PC-3 (cell line): ENCODE measurements at regions of chr2 and their contacts with region 1.

Region 1: GRCh38 chr2:127106951-127107621 is at the start of gene BIN1:
- DNase-seq: peak; percentile 89
- ATAC-seq: peak; percentile 84
- H3K4me3 ChIP-seq: peak within 1 kb of the TSS; percentile 97
- H3K27ac ChIP-seq: peak within 1 kb of the TSS; percentile 23
- H3K4me1 ChIP-seq: peaks cover 18% of the 10 kb centered on the region; the same call in 1 of the 2 replicates
- H3K27me3 ChIP-seq: no peaks in the 10 kb centered on the region
- CTCF ChIP-seq: no peak
- total RNA-seq, gene BIN1: 58.9 and 77.5 TPM in 2 replicates

Region 2: GRCh38 chr2:127034883-127035611 is 72.0 kb before region 1 on chr2:
- CTCF ChIA-PET with region 1: no interaction called
- POLR2A ChIA-PET with region 1: no interaction called
- intact Hi-C with region 1: no loop called
- DNase-seq: no peak
- ATAC-seq: no peak; the same call in none of the 2 replicates
- H3K4me3 ChIP-seq: no peak overlapping the region
- H3K27ac ChIP-seq: no peak overlapping the region
- H3K4me1 ChIP-seq: peaks cover 6% of the 10 kb centered on the region; the same call in 1 of the 2 replicates
- H3K27me3 ChIP-seq: no peaks in the 10 kb centered on the region
- CTCF ChIP-seq: no peak

Region 3: GRCh38 chr2:127064642-127065250 is 42.3 kb before region 1 on chr2:
- CTCF ChIA-PET with region 1: interaction called, 3 read pairs
- POLR2A ChIA-PET with region 1: no interaction called
- intact Hi-C with region 1: loop called (anchors 2 kb)
- DNase-seq: peak; percentile 98
- ATAC-seq: peak; percentile 97
- H3K4me3 ChIP-seq: peak overlapping the region; percentile 32; the same call in 1 of the 2 replicates
- H3K27ac ChIP-seq: peak overlapping the region; percentile 74
- H3K4me1 ChIP-seq: peaks cover 18% of the 10 kb centered on the region
- H3K27me3 ChIP-seq: no peaks in the 10 kb centered on the region
- CTCF ChIP-seq: peak; percentile 47

Region 4: DNA sequence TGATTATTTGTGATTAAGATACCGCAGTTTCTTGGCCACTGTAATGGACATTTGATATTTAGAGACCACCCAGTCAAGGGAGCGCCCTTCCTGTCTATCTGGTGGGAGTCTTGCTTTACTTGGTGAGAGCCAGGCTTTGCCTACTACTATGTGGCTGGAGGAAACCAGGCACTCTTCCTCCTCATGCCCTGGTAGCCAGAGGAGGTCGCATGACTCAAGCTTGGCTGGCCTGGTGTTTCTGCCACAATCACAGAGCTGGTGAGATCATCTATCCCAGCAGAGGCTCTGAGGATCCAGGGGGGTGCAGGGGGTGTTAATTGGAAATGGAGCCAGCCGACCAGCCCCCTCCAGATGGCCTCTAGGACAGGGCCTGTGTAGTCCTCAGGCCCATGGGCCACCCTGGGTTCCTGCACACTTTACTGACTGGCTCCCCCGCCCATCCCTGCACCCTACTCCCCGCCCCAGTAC is 46.6 kb after region 1 on chr2:
- CTCF ChIA-PET with region 1: interaction called, 7 read pairs
- POLR2A ChIA-PET with region 1: interaction called, 12 read pairs
- intact Hi-C with region 1: loop called (anchors 2 kb)
- DNase-seq: peak; percentile 91
- ATAC-seq: peak; percentile 95
- H3K4me3 ChIP-seq: no peak overlapping the region
- H3K27ac ChIP-seq: peak overlapping the region; percentile 78
- H3K4me1 ChIP-seq: peaks cover 34% of the 10 kb centered on the region
- H3K27me3 ChIP-seq: no peaks in the 10 kb centered on the region
- CTCF ChIP-seq: no peak; the same call in 1 of the 2 replicates

Region 5: GRCh38 chr2:127174136-127174535 is 67.0 kb after region 1 on chr2:
- CTCF ChIA-PET with region 1: no interaction called
- POLR2A ChIA-PET with region 1: no interaction called
- intact Hi-C with region 1: no loop called
- DNase-seq: peak; percentile 39
- ATAC-seq: peak; percentile 77
- H3K4me3 ChIP-seq: no peak overlapping the region
- H3K27ac ChIP-seq: no peak overlapping the region
- H3K4me1 ChIP-seq: peaks cover 7% of the 10 kb centered on the region
- H3K27me3 ChIP-seq: no peaks in the 10 kb centered on the region
- CTCF ChIP-seq: peak; percentile 42; the same call in 1 of the 2 replicates